ENCODE measurements at regions of chr5 and their contacts with region 1.

Region 1: DNA sequence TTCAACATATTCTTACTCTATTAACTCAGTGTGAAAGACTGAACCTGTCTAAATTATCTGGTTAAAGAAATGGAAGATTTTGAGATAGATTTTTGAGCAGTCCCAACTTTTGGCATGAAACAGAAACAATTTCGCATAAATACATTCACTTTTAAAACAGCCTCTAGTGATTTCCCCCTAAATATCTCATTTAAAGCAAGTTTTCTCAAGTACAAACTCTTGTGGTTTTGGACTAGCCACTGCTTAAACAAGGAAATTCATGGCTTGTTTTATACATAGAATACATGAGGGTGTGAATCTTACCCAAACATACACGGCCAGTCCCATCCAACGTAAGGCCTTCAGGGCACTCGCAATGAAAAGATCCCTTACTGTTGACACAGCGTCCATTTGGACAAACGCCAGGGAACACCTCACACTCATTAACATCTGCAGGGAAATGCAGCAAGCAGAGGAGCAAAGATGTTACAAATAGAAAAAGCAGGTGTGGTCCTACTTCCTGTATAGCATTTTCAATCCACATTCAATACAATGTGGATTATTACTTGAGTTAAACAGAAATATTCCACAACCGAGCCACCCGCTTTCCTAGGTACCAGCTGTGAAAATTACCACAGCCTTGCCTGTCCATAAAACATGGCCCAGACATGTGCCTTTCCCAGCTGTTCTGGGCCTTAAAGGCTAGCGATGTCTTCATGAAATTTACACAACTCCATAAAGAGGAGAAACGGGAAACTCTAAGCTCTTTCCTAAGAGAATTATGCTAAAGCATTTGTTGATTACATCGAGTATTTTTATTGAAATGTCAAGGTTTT is 188.8 kb downstream of the FBN2 start:
- DNase-seq: peak; percentile 10
- ATAC-seq: no peak
- H3K4me3 ChIP-seq: no peak overlapping the region
- H3K27ac ChIP-seq: no peak overlapping the region
- H3K4me1 ChIP-seq: no peaks in the 10 kb centered on the region
- H3K27me3 ChIP-seq: no peaks in the 10 kb centered on the region
- CTCF ChIP-seq: no peak
- POLR2A ChIP-seq: no peak
- RAD21 ChIP-seq: no peak

Region 2: DNA sequence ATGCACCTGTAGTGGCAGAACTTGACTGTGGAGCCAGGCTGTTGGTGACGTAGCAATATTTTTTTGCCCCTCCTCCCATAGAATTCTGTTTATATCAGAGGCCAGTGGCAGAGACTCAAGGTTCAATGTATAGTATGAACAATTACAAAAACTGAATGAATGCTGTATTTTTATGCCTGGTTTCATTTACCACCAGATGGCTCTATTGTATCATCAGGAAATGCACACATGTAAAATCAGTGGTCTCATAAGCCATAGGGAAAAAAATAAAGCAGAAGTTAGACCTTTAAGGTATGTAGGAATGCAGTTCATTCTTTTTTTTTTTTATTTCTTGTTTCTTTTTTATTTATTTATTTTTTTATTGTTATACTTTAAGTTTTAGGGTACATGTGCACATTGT is 602.5 kb before region 1 on chr5:
- CTCF ChIA-PET with region 1: no interaction called
- POLR2A ChIA-PET with region 1: no interaction called
- dilution Hi-C with region 1: no loop called
- in situ Hi-C with region 1: no loop called
- intact Hi-C with region 1: loop called (anchors 10 kb)
- DNase-seq: peak; percentile 55
- ATAC-seq: peak; percentile 40; the same call in 1 of the 2 replicates
- H3K4me3 ChIP-seq: no peak overlapping the region
- H3K27ac ChIP-seq: no peak overlapping the region
- H3K4me1 ChIP-seq: no peaks in the 10 kb centered on the region
- H3K27me3 ChIP-seq: peaks cover 8% of the 10 kb centered on the region
- CTCF ChIP-seq: peak; percentile 77
- POLR2A ChIP-seq: no peak
- RAD21 ChIP-seq: peak; percentile 84

Measured in IMR-90 (cell line).